PC-9 (cell line): ENCODE measurements at regions of chr18 and their contacts with region 1.

Region 1: GRCh38 chr18:8982416-8983184 is 119.9 kb upstream of the NDUFV2 start:
- DNase-seq: peak in 1 of 2 experiments; percentile 59
- H3K4me3 ChIP-seq: no peak overlapping the region
- H3K27ac ChIP-seq: no peak overlapping the region
- H3K4me1 ChIP-seq: no peaks in the 10 kb centered on the region
- H3K27me3 ChIP-seq: no peaks in the 10 kb centered on the region
- CTCF ChIP-seq: peak; percentile 68

Region 2: DNA sequence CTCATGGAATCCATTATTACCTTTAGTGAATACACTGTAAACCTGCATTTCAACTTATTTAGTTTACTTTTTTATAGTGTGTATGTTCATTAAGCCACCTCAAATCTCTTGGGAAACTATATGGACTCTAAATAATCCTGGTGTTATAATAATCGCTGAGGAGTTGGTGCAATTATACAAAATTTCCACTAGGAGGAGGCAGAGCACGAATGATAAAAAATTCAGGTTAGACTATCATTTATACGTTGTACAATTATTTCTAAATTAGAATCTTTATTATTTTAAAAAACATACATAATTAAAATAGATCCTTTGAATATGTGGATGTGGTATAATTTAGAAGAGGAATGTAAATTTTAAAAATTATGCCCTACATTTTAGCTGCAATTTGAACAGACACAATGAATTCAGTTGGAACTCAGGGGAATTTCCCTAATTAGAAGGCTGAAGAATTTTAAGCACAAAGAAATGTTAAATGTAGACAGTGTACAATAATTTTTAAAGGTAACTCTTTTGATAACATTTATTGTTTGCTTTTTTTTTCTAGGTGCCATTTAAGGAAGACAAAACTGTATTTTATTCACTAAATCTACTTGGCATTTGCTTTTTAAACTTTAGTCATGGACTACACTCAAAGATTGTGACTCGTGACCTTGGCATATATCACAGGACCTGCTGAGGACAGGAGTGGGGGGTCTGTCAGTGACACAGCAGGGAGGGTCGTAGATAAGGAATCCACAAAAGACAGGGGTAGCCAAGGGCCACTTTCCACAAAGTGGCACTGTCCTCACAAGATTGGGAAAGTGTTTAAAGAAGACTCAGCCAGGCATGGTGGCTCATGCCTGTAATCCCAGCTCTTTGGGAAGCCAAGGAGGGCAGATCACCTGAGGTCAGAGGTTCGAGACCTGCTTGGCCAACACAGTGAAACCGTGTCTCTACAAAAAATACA is 327.8 kb before region 1 on chr18:
- CTCF ChIA-PET with region 1: interaction called, 7 read pairs
- POLR2A ChIA-PET with region 1: no interaction called
- intact Hi-C with region 1: loop called (anchors 1 kb)
- DNase-seq: no peak
- H3K4me3 ChIP-seq: no peak overlapping the region
- H3K27ac ChIP-seq: no peak overlapping the region
- H3K4me1 ChIP-seq: no peaks in the 10 kb centered on the region; the same call in 1 of the 2 replicates
- H3K27me3 ChIP-seq: no peaks in the 10 kb centered on the region
- CTCF ChIP-seq: peak; percentile 85

Region 3: GRCh38 chr18:8696749-8697211 is 285.8 kb before region 1 on chr18:
- CTCF ChIA-PET with region 1: interaction called, 7 read pairs
- POLR2A ChIA-PET with region 1: no interaction called
- intact Hi-C with region 1: loop called (anchors 1 kb)
- DNase-seq: peak in 1 of 2 experiments; percentile 84
- H3K4me3 ChIP-seq: no peak overlapping the region
- H3K27ac ChIP-seq: no peak overlapping the region
- H3K4me1 ChIP-seq: no peaks in the 10 kb centered on the region
- H3K27me3 ChIP-seq: no peaks in the 10 kb centered on the region
- CTCF ChIP-seq: peak; percentile 94

Region 4: GRCh38 chr18:8890957-8891464 is 91.6 kb before region 1 on chr18:
- CTCF ChIA-PET with region 1: interaction called, 4 read pairs
- POLR2A ChIA-PET with region 1: no interaction called
- intact Hi-C with region 1: loop called (anchors 1 kb)
- DNase-seq: peak; percentile 79 to 99
- H3K4me3 ChIP-seq: no peak overlapping the region
- H3K27ac ChIP-seq: peak overlapping the region; percentile 51
- H3K4me1 ChIP-seq: peaks cover 17% of the 10 kb centered on the region
- H3K27me3 ChIP-seq: no peaks in the 10 kb centered on the region
- CTCF ChIP-seq: no peak

Region 5: GRCh38 chr18:8937160-8938094 is 45.2 kb before region 1 on chr18:
- CTCF ChIA-PET with region 1: no interaction called
- POLR2A ChIA-PET with region 1: no interaction called
- intact Hi-C with region 1: loop called (anchors 5 kb)
- DNase-seq: peak; percentile 59 to 94
- H3K4me3 ChIP-seq: no peak overlapping the region; the same call in 1 of the 2 replicates
- H3K27ac ChIP-seq: peak overlapping the region; percentile 57
- H3K4me1 ChIP-seq: peaks cover 36% of the 10 kb centered on the region
- H3K27me3 ChIP-seq: no peaks in the 10 kb centered on the region
- CTCF ChIP-seq: no peak

Region 6: GRCh38 chr18:9055185-9055584 is 72.6 kb after region 1 on chr18:
- CTCF ChIA-PET with region 1: no interaction called
- POLR2A ChIA-PET with region 1: no interaction called
- intact Hi-C with region 1: loop called (anchors 2 kb)
- DNase-seq: peak in 1 of 2 experiments; percentile 90
- H3K4me3 ChIP-seq: no peak overlapping the region
- H3K27ac ChIP-seq: peak overlapping the region; percentile 77
- H3K4me1 ChIP-seq: peaks cover 19% of the 10 kb centered on the region
- H3K27me3 ChIP-seq: no peaks in the 10 kb centered on the region
- CTCF ChIP-seq: no peak; the same call in 1 of the 2 replicates